SK-N-SH (cell line): ENCODE measurements at regions of chr1 and their contacts with region 1.

Region 1: GRCh38 chr1:159798893-159799292 is 3.3 kb upstream of the FCRL6 start:
- DNase-seq: peak; percentile 72
- H3K4me3 ChIP-seq: no peak overlapping the region
- H3K27ac ChIP-seq: no peak overlapping the region
- H3K4me1 ChIP-seq: no peaks in the 10 kb centered on the region
- H3K27me3 ChIP-seq: peaks cover 10% of the 10 kb centered on the region; the same call in 1 of the 2 replicates
- CTCF ChIP-seq: peak; percentile 87
- EP300 ChIP-seq: no peak
- RAD21 ChIP-seq: peak; percentile 88

Region 2: GRCh38 chr1:159214149-159214760 is 584.6 kb before region 1 on chr1:
- CTCF ChIA-PET with region 1: interaction called, 11 read pairs
- POLR2A ChIA-PET with region 1: no interaction called
- DNase-seq: peak; percentile 65
- H3K4me3 ChIP-seq: peak overlapping the region in 1 of 2 experiments; percentile 39; a peak in 1 of 4 replicates
- H3K27ac ChIP-seq: no peak overlapping the region
- H3K4me1 ChIP-seq: no peaks in the 10 kb centered on the region
- H3K27me3 ChIP-seq: peaks cover 15% of the 10 kb centered on the region; the same call in 1 of the 2 replicates
- CTCF ChIP-seq: peak; percentile 94
- EP300 ChIP-seq: no peak
- RAD21 ChIP-seq: peak; percentile 70

Region 3: GRCh38 chr1:159612211-159612885 is 186.5 kb before region 1 on chr1:
- CTCF ChIA-PET with region 1: no interaction called
- POLR2A ChIA-PET with region 1: no interaction called
- DNase-seq: no peak
- H3K4me3 ChIP-seq: no peak overlapping the region
- H3K27ac ChIP-seq: no peak overlapping the region
- H3K4me1 ChIP-seq: no peaks in the 10 kb centered on the region
- H3K27me3 ChIP-seq: peaks cover 6% of the 10 kb centered on the region; the same call in 1 of the 2 replicates
- CTCF ChIP-seq: no peak
- EP300 ChIP-seq: no peak
- RAD21 ChIP-seq: no peak

Region 4: GRCh38 chr1:159746666-159747065 is 52.2 kb before region 1 on chr1:
- CTCF ChIA-PET with region 1: no interaction called
- POLR2A ChIA-PET with region 1: no interaction called
- DNase-seq: no peak
- H3K4me3 ChIP-seq: no peak overlapping the region
- H3K27ac ChIP-seq: no peak overlapping the region
- H3K4me1 ChIP-seq: no peaks in the 10 kb centered on the region
- H3K27me3 ChIP-seq: no peaks in the 10 kb centered on the region
- CTCF ChIP-seq: no peak
- EP300 ChIP-seq: no peak
- RAD21 ChIP-seq: no peak

Region 5: DNA sequence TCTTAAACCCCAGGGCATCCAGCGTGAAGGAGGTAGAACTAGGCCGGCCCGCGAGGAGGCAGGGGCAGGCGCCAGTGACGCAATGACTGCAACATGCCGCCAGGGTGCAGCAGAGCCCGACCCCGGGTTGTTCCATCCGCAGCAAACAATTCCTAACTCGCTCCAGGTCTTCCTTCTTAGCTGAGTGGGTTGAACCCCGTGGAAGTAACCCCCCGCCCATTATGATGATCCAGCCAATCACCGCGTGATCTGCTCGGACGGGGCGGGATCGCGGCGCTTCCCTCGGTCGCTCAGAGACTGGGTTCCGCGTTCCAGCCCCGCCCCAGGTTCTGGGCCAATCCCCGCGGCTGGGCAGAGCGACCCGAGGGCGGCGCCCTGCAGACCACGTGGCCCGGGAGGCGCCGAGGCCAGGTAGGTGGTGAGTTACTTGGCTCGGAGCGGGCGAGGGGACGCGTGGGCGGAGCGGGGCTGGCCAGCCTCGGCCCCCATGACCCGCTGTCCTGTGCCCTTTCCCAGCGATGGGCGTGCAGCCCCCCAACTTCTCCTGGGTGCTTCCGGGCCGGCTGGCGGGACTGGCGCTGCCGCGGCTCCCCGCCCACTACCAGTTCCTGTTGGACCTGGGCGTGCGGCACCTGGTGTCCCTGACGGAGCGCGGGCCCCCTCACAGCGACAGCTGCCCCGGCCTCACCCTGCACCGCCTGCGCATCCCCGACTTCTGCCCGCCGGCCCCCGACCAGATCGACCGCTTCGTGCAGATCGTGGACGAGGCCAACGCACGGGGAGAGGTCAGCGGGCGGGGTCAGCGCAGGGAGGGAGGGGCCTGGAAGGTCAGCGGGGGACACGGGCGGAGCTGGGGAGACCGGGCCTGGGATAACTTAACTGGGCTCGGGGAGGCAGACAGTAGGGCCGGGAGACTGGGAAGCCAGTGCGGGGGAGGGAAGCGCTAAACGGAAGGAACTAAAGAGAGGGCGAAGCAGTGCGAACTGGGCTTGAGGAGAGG is 18.0 kb before region 1 on chr1 and contains the start of gene DUSP23:
- CTCF ChIA-PET with region 1: interaction called, 32 read pairs
- POLR2A ChIA-PET with region 1: no interaction called
- DNase-seq: peak; percentile 98
- H3K4me3 ChIP-seq: peak within 1 kb of the TSS; percentile 75 to 87
- H3K27ac ChIP-seq: peak within 1 kb of the TSS in 1 of 2 experiments; percentile 58; a peak in 2 of 4 replicates
- H3K4me1 ChIP-seq: peaks cover 0 to 20% of the 10 kb centered on the region in 2 experiments; a peak in 2 of 4 replicates
- H3K27me3 ChIP-seq: no peaks in the 10 kb centered on the region
- CTCF ChIP-seq: peak; percentile 86
- EP300 ChIP-seq: 0 out of 4 replicates have a peak, but pooled peaks of 1 of the 2 experiments have one; percentile 48
- RAD21 ChIP-seq: peak; percentile 87
- polyA plus RNA-seq, gene DUSP23: 41.2 and 44.3 TPM in 2 replicates

Region 6: DNA sequence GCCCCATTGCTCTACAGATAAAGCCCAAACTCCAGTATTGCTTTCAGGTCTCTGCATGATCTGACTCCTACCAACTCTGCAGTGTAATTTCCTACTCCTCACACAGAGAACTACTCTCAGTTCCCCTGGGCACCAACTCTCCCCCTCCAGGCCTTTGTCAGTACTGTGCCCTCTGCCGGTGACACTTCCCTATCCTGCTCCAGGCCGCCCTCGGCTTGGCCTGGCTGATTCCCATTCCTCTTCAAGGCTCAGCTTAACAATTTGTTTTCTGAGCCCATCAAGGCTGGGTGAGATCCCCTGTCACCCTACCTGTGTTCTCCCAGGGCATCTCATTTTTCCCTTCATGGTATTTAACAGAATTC is 30.4 kb after region 1 on chr1:
- CTCF ChIA-PET with region 1: interaction called, 41 read pairs
- POLR2A ChIA-PET with region 1: no interaction called
- DNase-seq: peak; percentile 20
- H3K4me3 ChIP-seq: no peak overlapping the region
- H3K27ac ChIP-seq: no peak overlapping the region
- H3K4me1 ChIP-seq: peaks cover 13% of the 10 kb centered on the region in 2 experiments; a peak in 2 of 4 replicates
- H3K27me3 ChIP-seq: no peaks in the 10 kb centered on the region
- CTCF ChIP-seq: peak; percentile 24; the same call in 1 of the 2 replicates
- EP300 ChIP-seq: no peak
- RAD21 ChIP-seq: no peak

Region 7: GRCh38 chr1:159854116-159854692 is 55.3 kb after region 1 on chr1:
- CTCF ChIA-PET with region 1: interaction called, 13 read pairs
- POLR2A ChIA-PET with region 1: no interaction called
- DNase-seq: peak; percentile 72
- H3K4me3 ChIP-seq: peak overlapping the region; percentile 36 to 49; a peak in 2 of 4 replicates
- H3K27ac ChIP-seq: peak overlapping the region in 1 of 2 experiments; percentile 56; a peak in 3 of 4 replicates
- H3K4me1 ChIP-seq: peaks cover 6 to 12% of the 10 kb centered on the region in 2 experiments; a peak in 3 of 4 replicates
- H3K27me3 ChIP-seq: no peaks in the 10 kb centered on the region
- CTCF ChIP-seq: no peak
- EP300 ChIP-seq: no peak
- RAD21 ChIP-seq: no peak

Region 8: DNA sequence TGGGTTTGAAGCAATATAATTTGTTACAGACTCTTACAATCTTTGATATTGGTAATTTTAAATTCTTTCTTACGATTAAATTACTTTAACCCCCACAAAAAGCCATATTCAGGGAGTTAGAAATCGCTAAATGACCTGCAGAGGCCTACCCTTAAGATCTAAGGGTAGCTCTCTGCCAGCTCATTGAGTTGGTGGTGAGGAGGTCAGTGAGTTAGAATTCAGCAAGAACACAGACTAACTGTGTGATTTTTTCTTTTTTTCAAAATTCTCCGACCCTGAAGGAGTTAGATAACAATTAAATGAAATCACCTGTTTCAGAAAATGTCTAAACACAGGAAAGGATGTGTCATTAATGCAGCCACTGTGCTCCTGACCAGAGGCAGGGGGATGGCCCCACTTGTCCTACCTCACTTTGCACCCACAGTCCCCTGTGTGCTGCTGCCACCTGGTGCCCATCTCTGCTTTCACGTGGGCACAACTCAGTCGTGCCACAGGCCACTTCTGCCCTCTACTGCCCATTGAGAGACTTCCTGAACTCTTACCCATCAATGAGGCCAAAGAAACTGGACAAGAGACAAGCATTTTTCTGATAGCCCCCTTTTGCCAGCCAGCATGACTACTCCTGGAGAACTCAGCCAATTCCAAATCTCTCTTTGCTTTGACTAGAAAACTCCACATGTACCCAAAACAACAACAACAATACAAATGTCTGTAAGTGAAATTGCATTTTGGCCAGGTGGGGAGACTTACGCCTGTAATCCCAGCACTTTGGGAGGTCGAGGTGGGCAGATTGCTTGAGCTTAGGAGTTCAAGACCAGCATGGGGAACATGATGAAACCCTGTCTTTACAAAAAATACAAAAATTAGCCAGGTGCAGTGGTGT is 92.6 kb after region 1 on chr1:
- CTCF ChIA-PET with region 1: interaction called, 533 read pairs
- POLR2A ChIA-PET with region 1: interaction called, 6 read pairs
- DNase-seq: peak; percentile 87
- H3K4me3 ChIP-seq: no peak overlapping the region; a peak in 1 of 4 replicates
- H3K27ac ChIP-seq: peak overlapping the region in 1 of 2 experiments; percentile 94; a peak in 2 of 4 replicates
- H3K4me1 ChIP-seq: peaks cover 13 to 29% of the 10 kb centered on the region in 2 experiments
- H3K27me3 ChIP-seq: no peaks in the 10 kb centered on the region
- CTCF ChIP-seq: peak; percentile 100
- EP300 ChIP-seq: no peak
- RAD21 ChIP-seq: peak; percentile 100

Region 9: GRCh38 chr1:159945483-159946241 is 146.8 kb after region 1 on chr1 and contains the start of gene IGSF9:
- CTCF ChIA-PET with region 1: interaction called, 13 read pairs
- POLR2A ChIA-PET with region 1: no interaction called
- DNase-seq: peak; percentile 95
- H3K4me3 ChIP-seq: peak within 1 kb of the TSS; percentile 68 to 72
- H3K27ac ChIP-seq: no peak within 1 kb of the TSS; a peak in 1 of 4 replicates
- H3K4me1 ChIP-seq: peaks cover 0 to 36% of the 10 kb centered on the region in 2 experiments; a peak in 1 of 4 replicates
- H3K27me3 ChIP-seq: no peaks in the 10 kb centered on the region; the same call in 1 of the 2 replicates
- CTCF ChIP-seq: peak; percentile 66
- EP300 ChIP-seq: no peak
- RAD21 ChIP-seq: peak; percentile 61
- polyA plus RNA-seq, gene IGSF9: 0.86 and 2.4 TPM in 2 replicates